GM13977 (cell line): ENCODE measurements at regions of chr1 and their contacts with region 1.

Region 1: GRCh38 chr1:205598841-205599668 is 32.8 kb downstream of the ELK4 start:
- DNase-seq: no peak
- CTCF ChIP-seq: no peak

Region 2: GRCh38 chr1:205485338-205486228 is 113.5 kb before region 1 on chr1:
- in situ Hi-C with region 1: no loop called
- DNase-seq: peak; percentile 89
- CTCF ChIP-seq: peak; percentile 93

Region 3: DNA sequence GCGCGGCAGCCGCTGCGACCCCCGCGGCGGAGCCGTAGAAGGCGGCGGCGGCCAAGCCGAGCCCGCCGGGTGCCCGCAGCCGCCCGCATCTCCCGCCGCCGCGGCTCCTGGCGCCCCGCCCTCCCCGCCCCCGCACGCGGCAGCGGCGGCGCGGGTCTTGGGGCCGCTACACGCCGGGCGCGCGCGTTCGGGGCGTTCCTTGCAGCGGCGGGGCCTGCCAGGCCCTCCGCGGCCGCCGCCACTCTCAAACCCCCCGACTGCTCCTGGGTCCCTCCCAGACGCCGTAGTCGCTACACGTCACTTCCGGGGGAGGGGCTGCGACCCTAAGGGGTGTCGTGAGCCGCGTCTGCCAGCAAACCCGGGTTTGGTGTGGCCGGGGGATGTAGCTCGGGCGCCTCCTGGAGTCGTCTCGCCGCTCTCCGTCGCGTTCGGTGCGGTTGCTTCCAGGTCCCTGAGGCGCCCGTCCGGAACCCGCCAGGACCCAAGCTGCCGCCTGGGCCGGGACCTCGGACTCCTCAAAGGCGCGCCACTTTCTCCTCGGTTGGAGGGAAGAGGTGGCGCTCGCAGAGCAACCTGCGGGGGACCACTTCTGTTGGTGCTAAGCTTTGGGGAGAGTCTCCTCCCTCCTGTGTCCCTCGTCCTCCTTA is 32.8 kb after region 1 on chr1 and contains the start of gene ELK4:
- in situ Hi-C with region 1: loop called (anchors 5 kb)
- DNase-seq: peak; percentile 96
- CTCF ChIP-seq: peak; percentile 85

Region 4: DNA sequence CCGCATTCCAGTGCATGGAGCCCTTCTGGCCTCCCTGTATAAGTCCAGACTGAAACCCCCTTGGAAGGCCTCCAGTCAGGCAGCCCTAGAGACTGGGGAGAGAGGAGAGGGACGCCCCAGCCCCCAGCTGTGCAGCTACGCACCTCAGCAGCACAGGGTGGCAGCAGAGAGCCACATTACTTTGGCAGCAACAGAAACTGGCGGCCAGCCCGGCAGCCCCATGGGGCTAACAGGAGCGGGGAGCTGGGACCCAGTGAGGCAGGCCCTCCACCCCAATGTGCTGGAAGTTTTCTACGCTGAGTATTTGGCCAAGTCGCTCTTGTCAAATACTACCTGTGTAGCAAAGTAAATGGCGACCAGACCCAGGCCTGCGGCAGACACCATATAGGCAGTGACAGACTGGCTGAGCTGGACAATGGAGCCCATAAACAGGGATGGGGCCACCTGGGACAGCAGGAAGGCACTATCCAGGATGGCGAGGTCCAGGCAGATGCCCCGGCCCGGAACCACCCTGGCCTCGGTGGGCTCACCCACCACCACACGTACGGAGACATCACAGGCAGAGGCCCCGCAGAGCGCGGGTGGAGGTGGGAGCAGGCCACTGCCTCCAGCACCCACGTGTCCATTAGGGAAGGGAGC is 60.0 kb after region 1 on chr1:
- in situ Hi-C with region 1: no loop called
- DNase-seq: peak; percentile 91
- CTCF ChIP-seq: peak; percentile 97

Region 5: DNA sequence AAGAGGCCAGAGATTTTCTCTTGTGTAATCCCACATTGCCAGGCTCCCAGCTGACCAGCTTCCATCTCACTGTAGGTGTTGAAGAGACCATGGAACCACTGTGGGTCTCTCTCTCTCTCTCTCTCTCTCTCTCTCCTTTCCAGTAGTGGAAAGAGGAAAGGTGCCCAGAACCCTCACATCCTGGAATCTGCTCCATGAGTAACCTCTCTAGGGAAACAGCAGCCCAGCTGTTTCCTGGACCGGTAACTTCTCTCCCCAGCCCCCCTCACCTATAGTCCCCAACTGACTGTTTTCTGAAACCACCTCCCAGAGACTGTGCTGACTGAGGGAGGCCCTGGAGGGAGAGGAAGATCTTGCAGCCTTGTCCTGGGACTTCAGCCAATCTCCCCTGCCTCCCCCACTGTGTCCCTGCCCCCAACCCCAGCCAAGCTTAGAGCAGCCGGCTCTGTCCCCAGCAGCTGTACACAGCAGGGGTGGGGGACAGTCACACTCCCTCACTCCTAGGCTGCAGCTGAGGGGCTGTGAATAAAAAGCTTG is 101.9 kb after region 1 on chr1:
- in situ Hi-C with region 1: no loop called
- DNase-seq: no peak
- CTCF ChIP-seq: no peak